Activated CD4-positive, alpha-beta T cell treated with anti-CD3 and anti-CD28 coated beads, Interleukin-2, amount 10 ng/mL, durations not matched to agents 24 days and 14 days (primary cell): ENCODE measurements at regions of chr1 and their contacts with region 1.

Region 1: GRCh38 chr1:156500797-156501499 is 373 bp upstream of the MEF2D start:
- DNase-seq: peak; percentile 97
- H3K4me3 Mint-ChIP-seq: peak overlapping the region; percentile 91
- H3K27ac Mint-ChIP-seq: peak overlapping the region; percentile 96
- H3K4me1 Mint-ChIP-seq: peaks cover 66% of the 10 kb centered on the region
- H3K27me3 Mint-ChIP-seq: no peaks in the 10 kb centered on the region

Region 2: DNA sequence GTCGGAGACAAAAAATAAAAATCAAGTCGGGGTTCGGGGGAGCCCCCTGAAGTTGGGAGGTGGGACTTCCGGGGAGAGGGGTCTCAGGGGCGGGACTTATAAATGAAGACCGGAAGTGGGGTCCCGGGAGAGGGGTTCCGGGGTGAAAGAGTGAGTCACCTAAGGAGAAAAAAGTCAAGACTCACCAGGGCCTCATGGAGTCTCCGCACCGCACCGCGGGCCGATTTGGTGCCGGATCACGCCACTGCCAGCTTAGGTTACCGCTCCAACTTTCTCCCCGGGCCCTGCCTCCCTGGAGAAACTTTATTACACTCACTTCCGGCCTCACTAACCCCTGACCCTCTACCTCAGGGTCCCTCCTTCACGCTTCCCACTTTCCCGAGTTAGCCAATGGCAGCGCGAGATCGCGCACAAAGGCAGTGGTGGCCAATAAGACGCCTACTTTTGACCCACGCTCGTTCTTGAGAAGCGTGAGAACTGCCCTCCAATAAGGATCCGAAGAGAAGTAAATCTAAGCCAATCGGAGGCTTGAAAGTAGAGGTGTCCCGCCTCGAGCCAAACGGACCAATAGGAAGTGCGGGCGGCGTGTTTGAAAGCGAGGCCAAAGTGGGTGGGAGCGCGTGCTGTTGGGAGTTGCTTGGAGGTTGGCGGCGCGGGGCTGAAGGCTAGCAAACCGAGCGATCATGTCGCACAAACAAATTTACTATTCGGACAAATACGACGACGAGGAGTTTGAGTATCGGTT is 1526.7 kb before region 1 on chr1 and contains the start of gene CKS1B:
- intact Hi-C with region 1: loop called (anchors 10 kb)
- DNase-seq: peak; percentile 98
- H3K4me3 Mint-ChIP-seq: no peak within 1 kb of the TSS
- H3K27ac Mint-ChIP-seq: no peak within 1 kb of the TSS
- H3K4me1 Mint-ChIP-seq: peaks cover 39% of the 10 kb centered on the region
- H3K27me3 Mint-ChIP-seq: no peaks in the 10 kb centered on the region
- total RNA-seq, gene CKS1B: 179 and 181 TPM in 2 replicates

Region 3: GRCh38 chr1:155244368-155245162 is 1256.4 kb before region 1 on chr1:
- intact Hi-C with region 1: no loop called
- DNase-seq: peak; percentile 99
- H3K4me3 Mint-ChIP-seq: peak overlapping the region; percentile 81
- H3K27ac Mint-ChIP-seq: peak overlapping the region; percentile 96
- H3K4me1 Mint-ChIP-seq: peaks cover 49% of the 10 kb centered on the region
- H3K27me3 Mint-ChIP-seq: peaks cover 3% of the 10 kb centered on the region

Region 4: GRCh38 chr1:155910621-155911121 is 590.3 kb before region 1 on chr1:
- intact Hi-C with region 1: no loop called
- DNase-seq: peak; percentile 74
- H3K4me3 Mint-ChIP-seq: peak overlapping the region; percentile 97
- H3K27ac Mint-ChIP-seq: peak overlapping the region; percentile 99
- H3K4me1 Mint-ChIP-seq: peaks cover 21% of the 10 kb centered on the region
- H3K27me3 Mint-ChIP-seq: no peaks in the 10 kb centered on the region

Region 5: DNA sequence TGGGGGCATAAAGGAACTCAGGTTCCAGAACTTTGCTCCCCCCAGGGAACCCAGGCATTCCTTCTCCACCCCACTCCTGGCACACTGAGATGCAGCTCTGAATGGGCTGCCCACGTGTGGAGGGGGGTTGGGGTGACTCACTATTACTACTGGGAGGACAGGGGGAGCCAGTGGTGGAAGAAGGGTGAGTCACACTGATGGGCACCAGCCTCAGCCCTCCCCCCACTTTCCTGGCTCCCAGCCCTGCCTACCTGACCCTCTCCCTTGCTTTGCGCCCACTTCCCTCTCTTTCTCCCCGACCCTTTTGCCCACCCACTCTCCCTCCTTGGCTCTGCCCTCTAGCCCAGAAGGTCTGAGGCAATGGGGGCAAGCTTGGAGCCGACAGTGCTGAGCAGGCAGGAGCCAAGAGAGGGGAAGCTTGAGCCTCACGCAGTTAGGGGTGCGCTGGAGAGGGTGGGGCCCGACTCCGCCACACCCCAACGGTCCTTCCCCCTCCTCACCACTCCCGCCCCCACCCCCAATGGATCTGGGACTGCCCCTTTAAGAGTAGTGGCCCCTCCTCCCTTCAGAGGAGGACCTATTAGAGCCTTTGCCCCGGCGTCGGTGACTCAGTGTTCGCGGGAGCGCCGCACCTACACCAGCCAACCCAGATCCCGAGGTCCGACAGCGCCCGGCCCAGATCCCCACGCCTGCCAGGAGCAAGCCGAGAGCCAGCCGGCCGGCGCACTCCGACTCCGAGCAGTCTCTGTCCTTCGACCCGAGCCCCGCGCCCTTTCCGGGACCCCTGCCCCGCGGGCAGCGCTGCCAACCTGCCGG is 386.6 kb before region 1 on chr1 and contains the start of gene LMNA:
- intact Hi-C with region 1: loop called (anchors 5 kb)
- DNase-seq: peak; percentile 88
- H3K4me3 Mint-ChIP-seq: peak within 1 kb of the TSS; percentile 92
- H3K27ac Mint-ChIP-seq: peak within 1 kb of the TSS; percentile 81
- H3K4me1 Mint-ChIP-seq: peaks cover 28% of the 10 kb centered on the region
- H3K27me3 Mint-ChIP-seq: peaks cover 45% of the 10 kb centered on the region
- total RNA-seq, gene LMNA: 105 and 110 TPM in 2 replicates

Region 6: GRCh38 chr1:156338180-156338973 is 162.6 kb before region 1 on chr1 and contains the starts of genes CCT3 and TSACC:
- intact Hi-C with region 1: loop called (anchors 5 kb)
- DNase-seq: peak; percentile 100
- H3K4me3 Mint-ChIP-seq: peak within 1 kb of the TSS; percentile 99
- H3K27ac Mint-ChIP-seq: peak within 1 kb of the TSS; percentile 97
- H3K4me1 Mint-ChIP-seq: peaks cover 26% of the 10 kb centered on the region
- H3K27me3 Mint-ChIP-seq: peaks cover 9% of the 10 kb centered on the region
- total RNA-seq, gene CCT3: 623 TPM in 2 replicates
- total RNA-seq, gene TSACC: 0.47 and 0.82 TPM in 2 replicates

Region 7: GRCh38 chr1:156368889-156369684 is 131.9 kb before region 1 on chr1 and contains the start of gene RHBG:
- intact Hi-C with region 1: no loop called
- DNase-seq: no peak
- H3K4me3 Mint-ChIP-seq: peak within 1 kb of the TSS; percentile 37
- H3K27ac Mint-ChIP-seq: no peak within 1 kb of the TSS
- H3K4me1 Mint-ChIP-seq: peaks cover 6% of the 10 kb centered on the region
- H3K27me3 Mint-ChIP-seq: peaks cover 63% of the 10 kb centered on the region
- total RNA-seq, gene RHBG: not detected in 2 replicates

Region 8: GRCh38 chr1:156480411-156481192 is 20.3 kb before region 1 on chr1:
- intact Hi-C with region 1: loop called (anchors 1 kb)
- DNase-seq: peak; percentile 92
- H3K4me3 Mint-ChIP-seq: peak overlapping the region; percentile 7
- H3K27ac Mint-ChIP-seq: peak overlapping the region; percentile 30
- H3K4me1 Mint-ChIP-seq: peaks cover 49% of the 10 kb centered on the region
- H3K27me3 Mint-ChIP-seq: no peaks in the 10 kb centered on the region

Region 9: GRCh38 chr1:156524481-156524869 is 23.5 kb after region 1 on chr1:
- intact Hi-C with region 1: loop called (anchors 1 kb)
- DNase-seq: peak; percentile 66
- H3K4me3 Mint-ChIP-seq: peak overlapping the region; percentile 40
- H3K27ac Mint-ChIP-seq: peak overlapping the region; percentile 66
- H3K4me1 Mint-ChIP-seq: peaks cover 29% of the 10 kb centered on the region
- H3K27me3 Mint-ChIP-seq: peaks cover 5% of the 10 kb centered on the region

Region 10: DNA sequence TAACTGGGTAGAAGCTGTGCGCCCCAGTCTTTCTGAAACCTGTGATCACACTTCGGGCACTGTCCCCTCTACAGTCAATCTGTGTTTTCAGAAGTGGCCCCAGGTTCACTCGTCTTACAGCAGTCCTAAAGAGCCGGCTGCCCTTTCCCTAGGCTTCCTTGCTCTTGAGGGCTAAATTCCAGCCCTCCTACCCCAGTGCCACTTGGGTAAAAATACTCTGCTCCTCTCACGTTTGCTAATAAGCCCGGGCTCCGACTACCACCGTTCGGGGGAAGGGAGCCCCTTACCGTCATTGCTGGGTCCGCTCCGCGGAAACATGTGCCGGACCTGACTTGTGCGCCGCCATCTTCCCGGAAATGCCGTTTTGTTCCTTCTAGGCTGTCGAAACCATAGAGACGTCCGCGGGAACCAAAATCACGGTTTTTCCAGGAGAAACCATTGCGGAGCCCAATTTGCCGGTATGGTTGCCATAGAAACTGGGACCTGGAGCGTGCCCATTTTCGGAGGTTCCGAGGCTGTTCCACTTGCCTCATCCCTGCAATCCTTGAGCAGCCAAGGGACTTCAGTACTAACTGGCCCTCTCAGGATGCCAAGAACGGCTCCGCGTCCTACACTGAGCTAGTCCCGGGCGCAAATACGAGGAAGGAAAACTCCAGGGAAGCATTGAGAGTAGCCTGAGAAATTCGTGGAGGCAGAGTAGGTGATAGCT is 100.3 kb after region 1 on chr1 and contains the start of gene GPATCH4:
- intact Hi-C with region 1: loop called (anchors 1 kb)
- DNase-seq: peak; percentile 95
- H3K4me3 Mint-ChIP-seq: peak within 1 kb of the TSS; percentile 88
- H3K27ac Mint-ChIP-seq: peak within 1 kb of the TSS; percentile 98
- H3K4me1 Mint-ChIP-seq: peaks cover 33% of the 10 kb centered on the region
- H3K27me3 Mint-ChIP-seq: no peaks in the 10 kb centered on the region
- total RNA-seq, gene GPATCH4: 99.0 and 99.2 TPM in 2 replicates

Region 11: DNA sequence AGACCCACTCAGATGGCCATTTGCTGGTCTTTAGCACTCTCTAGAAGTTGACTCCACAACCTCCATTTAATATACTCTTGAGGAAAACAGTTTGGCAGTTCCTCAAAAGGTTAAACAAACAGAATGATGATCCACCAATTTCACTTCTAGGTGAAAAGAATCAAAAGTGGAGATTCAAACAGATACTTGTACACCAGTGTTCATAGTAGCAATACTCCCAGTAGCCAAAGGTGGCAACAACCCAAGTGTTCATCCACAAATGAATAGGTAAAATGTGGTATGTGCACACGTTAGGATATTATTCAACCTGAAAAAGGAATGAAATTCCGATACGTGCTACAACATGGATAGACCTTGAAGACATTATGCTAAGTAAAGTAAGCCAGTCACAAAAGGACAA is 272.7 kb after region 1 on chr1:
- intact Hi-C with region 1: no loop called
- DNase-seq: no peak
- H3K4me3 Mint-ChIP-seq: no peak overlapping the region
- H3K27ac Mint-ChIP-seq: no peak overlapping the region
- H3K4me1 Mint-ChIP-seq: peaks cover 54% of the 10 kb centered on the region
- H3K27me3 Mint-ChIP-seq: no peaks in the 10 kb centered on the region